ENCODE measurements at regions of chr3 and their contacts with region 1.

Region 1: GRCh38 chr3:128946411-128946810 is 47.5 kb downstream of the CFAP92 start:
- DNase-seq: no peak
- H3K4me3 ChIP-seq: no peak overlapping the region
- H3K27ac ChIP-seq: no peak overlapping the region
- H3K4me1 ChIP-seq: no peaks in the 10 kb centered on the region
- H3K27me3 ChIP-seq: no peaks in the 10 kb centered on the region
- CTCF ChIP-seq: no peak

Region 2: DNA sequence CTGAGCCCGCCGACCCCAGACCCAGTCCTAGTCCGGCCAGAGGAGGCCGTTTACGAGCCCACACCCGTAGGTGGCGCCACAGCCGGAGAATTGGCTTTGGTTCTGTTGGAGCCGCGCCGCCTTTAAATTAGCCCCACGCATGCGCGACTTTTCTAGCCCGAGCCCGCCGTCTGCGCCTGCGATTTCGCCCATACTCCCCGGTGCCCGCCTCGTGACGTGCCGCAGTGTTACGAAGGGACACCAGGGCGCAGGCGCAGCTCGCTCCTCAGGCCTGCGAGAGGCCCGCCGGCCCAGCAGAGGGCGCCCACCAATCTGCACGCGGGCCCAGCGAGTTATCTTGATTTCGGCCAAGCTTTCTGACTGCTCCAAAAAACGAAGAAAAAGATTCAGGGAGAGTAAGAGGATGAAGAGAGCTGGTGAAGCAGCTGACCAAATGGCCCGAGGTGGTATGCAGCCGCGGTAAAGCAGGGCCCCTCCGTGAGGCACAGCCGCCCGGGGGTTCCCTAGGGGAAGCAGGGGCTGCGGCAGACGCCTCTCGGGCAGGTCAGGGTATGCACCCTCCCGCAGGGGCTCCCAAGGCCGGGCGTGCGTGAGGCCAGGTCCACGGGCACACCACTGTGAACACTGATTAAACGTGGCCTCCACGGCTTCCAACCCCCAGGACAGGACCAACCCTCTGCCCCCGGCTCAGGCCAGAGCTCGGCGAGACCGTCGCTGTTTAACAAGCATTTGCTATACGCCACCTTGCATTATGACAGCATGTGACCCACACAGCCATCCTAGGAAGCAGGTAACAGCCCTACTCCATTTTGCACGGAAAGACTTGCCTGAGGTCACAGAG is 328.6 kb before region 1 on chr3:
- CTCF ChIA-PET with region 1: no interaction called
- POLR2A ChIA-PET with region 1: no interaction called
- intact Hi-C with region 1: loop called (anchors 10 kb)
- DNase-seq: peak; percentile 98
- H3K4me3 ChIP-seq: peak overlapping the region; percentile 71
- H3K27ac ChIP-seq: peak overlapping the region; percentile 85
- H3K4me1 ChIP-seq: no peaks in the 10 kb centered on the region
- H3K27me3 ChIP-seq: no peaks in the 10 kb centered on the region
- CTCF ChIP-seq: peak; percentile 99

Measured in A673 (cell line).